CD4-positive, alpha-beta T cell (primary cell): ENCODE measurements at regions of chr9 and their contacts with region 1.

Region 1: GRCh38 chr9:133030317-133031129 is at the start of gene GTF3C5:
- DNase-seq: peak; percentile 83 to 98 (median 89)
- ATAC-seq: peak; percentile 96
- H3K4me3 ChIP-seq: peak within 1 kb of the TSS; percentile 93
- H3K4me3 Mint-ChIP-seq: peak within 1 kb of the TSS; percentile 99
- H3K27ac ChIP-seq: peak within 1 kb of the TSS; percentile 83 to 93
- H3K27ac Mint-ChIP-seq: peak within 1 kb of the TSS; percentile 89
- H3K4me1 ChIP-seq: peaks cover 31% of the 10 kb centered on the region
- H3K4me1 Mint-ChIP-seq: peaks cover 49% of the 10 kb centered on the region
- H3K27me3 ChIP-seq: no peaks in the 10 kb centered on the region
- H3K27me3 Mint-ChIP-seq: no peaks in the 10 kb centered on the region
- CTCF ChIP-seq: no peak
- total RNA-seq, gene GTF3C5: 49.0 to 52.4 TPM

Region 2: DNA sequence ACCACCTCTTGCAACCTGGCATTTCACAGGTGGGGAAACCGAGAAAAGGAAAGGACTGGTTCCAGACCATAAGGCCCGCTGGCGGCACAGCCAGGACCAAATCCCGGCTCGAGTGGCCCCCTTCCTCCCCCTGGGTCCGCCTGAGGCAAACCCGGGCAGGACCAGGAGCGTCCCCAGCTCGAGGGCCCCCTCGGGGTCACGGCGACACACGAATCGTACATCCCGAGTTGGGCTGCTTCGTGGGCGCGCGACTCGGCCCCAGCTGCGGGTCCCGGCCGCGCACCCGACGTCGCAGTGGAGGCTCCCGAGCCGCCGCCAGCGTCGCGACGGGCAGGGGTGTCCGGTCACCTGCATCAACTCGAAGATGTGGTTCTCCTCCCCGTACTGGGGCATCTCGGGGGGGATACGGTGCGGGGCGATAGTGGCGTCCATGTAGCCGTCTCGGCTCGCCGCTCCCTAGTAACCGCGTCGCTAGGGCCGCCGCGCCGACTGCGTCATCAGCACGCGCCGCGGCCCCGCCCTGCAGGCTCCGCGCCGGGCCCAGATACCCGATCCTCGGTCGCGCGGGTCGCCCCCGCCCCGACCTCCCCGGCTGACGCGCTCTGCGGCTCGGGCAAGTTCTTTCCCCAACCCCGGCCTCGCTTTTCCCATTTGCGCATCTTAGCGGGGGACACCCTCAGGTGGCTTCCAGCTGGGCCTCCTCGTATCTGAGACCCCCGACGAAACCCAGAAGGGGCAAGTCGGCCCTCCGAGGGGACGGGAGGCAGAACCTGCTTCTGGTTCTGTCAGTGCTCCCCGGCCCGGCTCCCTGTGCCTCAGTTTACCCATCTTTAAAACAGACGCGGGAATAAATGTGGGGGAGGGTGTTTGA is 152.5 kb before region 1 on chr9 and contains the start of gene AK8:
- CTCF ChIA-PET with region 1: no interaction called
- POLR2A ChIA-PET with region 1: no interaction called
- intact Hi-C with region 1: loop called in 1 of 2 experiments (anchors 5 kb)
- DNase-seq: peak; percentile 54 to 91 (median 69)
- ATAC-seq: peak; percentile 86
- H3K4me3 ChIP-seq: peak within 1 kb of the TSS; percentile 98
- H3K4me3 Mint-ChIP-seq: peak within 1 kb of the TSS; percentile 93
- H3K27ac ChIP-seq: peak within 1 kb of the TSS in 1 of 2 donors; percentile 44
- H3K27ac Mint-ChIP-seq: peak within 1 kb of the TSS; percentile 90
- H3K4me1 ChIP-seq: peaks cover 25% of the 10 kb centered on the region
- H3K4me1 Mint-ChIP-seq: peaks cover 13% of the 10 kb centered on the region
- H3K27me3 ChIP-seq: no peaks in the 10 kb centered on the region
- H3K27me3 Mint-ChIP-seq: no peaks in the 10 kb centered on the region
- CTCF ChIP-seq: no peak
- total RNA-seq, gene AK8: not detected

Region 3: GRCh38 chr9:133058550-133059320 is 28.2 kb after region 1 on chr9:
- CTCF ChIA-PET with region 1: no interaction called
- POLR2A ChIA-PET with region 1: interaction called, 10 read pairs
- intact Hi-C with region 1: no loop called
- DNase-seq: peak in 2 of 14 experiments; percentile 11 to 14
- ATAC-seq: no peak
- H3K4me3 ChIP-seq: no peak overlapping the region
- H3K4me3 Mint-ChIP-seq: peak overlapping the region; percentile 12
- H3K27ac ChIP-seq: no peak overlapping the region
- H3K27ac Mint-ChIP-seq: peak overlapping the region; percentile 77
- H3K4me1 ChIP-seq: peaks cover 46% of the 10 kb centered on the region
- H3K4me1 Mint-ChIP-seq: peaks cover 44% of the 10 kb centered on the region
- H3K27me3 ChIP-seq: no peaks in the 10 kb centered on the region
- H3K27me3 Mint-ChIP-seq: no peaks in the 10 kb centered on the region
- CTCF ChIP-seq: no peak

Region 4: DNA sequence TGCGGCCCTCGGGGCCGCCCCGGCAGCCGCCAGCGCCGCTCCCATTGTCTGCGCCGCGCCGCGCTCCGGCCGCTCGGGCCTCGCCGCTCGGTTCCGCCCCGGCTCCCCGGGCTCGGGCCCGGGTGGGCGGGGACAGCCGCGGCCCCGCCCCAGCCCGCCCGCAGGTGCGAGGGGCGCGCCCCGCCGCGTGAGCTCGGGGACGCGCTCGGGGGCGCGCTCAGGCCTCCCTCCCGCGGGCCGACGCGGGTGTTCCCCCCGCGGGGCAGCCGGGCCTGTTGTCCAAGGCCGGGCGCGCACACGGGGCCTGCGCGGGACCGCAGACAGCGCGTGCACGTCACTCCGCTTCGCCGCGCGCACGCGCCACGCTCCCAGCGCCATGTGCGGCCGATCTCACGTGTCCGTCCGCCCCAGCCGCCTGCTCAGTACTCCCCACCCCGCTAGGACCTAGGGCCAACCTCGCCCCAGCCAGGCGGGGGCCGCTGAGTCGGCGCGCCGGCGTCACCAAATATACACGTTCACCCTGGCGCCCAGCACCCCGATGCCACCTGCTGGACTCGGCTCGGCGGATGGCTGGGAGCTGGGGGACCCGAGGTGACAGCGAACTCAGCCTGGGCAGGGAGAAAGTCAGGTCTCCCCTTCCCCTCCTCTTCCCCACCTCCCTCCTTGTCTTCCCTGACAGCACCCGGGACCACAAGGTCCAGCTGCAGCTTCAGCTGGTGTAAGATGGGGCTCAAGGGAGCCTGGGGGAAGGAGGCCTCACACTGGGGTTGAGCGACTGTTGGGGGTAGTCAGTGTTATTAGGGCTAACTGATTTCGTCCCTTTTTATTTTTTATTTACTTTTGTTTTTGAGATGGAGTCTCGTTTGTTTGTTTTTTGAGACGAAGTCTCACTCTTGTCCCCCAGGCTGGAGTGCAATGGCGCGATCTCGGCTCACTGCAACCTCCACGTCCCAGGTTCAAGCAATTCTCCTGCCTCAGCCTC is 118.9 kb after region 1 on chr9:
- CTCF ChIA-PET with region 1: interaction called, 5 read pairs
- POLR2A ChIA-PET with region 1: interaction called, 20 read pairs
- intact Hi-C with region 1: loop called in 1 of 2 experiments (anchors 5 kb)
- DNase-seq: peak; percentile 64 to 95 (median 73)
- ATAC-seq: peak; percentile 43
- H3K4me3 ChIP-seq: peak overlapping the region; percentile 58
- H3K4me3 Mint-ChIP-seq: peak overlapping the region; percentile 88
- H3K27ac ChIP-seq: peak overlapping the region; percentile 60 to 74
- H3K27ac Mint-ChIP-seq: peak overlapping the region; percentile 87
- H3K4me1 ChIP-seq: peaks cover 43% of the 10 kb centered on the region
- H3K4me1 Mint-ChIP-seq: peaks cover 33% of the 10 kb centered on the region
- H3K27me3 ChIP-seq: no peaks in the 10 kb centered on the region
- H3K27me3 Mint-ChIP-seq: no peaks in the 10 kb centered on the region
- CTCF ChIP-seq: peak; percentile 44

Region 5: DNA sequence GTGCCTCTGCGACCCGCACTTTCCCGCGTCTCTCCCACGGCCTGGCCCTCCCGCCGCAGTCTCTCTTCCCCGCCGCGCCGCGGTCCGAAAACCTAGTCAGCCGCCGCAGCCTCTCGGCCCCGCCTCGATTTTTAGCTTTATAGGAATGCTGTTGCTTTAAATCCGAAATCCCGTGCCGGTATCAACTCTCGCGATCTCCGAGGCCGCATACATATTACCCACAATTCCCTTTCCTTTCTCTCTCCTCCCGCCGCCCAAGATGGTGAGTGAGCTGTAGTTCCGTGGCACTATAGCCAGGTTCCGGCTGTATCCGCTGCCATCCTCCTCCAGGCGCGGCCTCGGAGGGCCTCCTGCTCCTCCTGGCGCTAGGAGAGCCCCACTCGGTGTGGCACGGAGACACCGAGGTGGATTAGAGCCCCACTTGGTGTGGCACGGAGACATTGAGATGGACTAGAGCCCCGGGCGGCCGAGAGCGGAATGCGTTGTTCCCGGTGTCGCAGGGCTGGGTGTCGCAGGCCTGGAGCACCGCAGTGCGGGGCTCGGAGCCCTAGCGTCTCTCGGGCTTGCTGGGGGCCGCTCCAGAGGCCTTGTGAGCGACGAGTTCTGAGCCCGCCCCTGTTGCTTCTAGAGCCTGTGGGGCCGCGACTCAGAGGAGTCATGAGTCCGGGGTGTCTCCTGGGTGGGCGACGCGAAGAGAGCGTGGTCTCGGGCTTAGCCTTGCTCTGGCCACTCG is 317.6 kb after region 1 on chr9 and contains the starts of genes MED22 and RPL7A:
- CTCF ChIA-PET with region 1: no interaction called
- POLR2A ChIA-PET with region 1: interaction called, 10 read pairs
- intact Hi-C with region 1: loop called in 1 of 2 experiments (anchors 5 kb)
- DNase-seq: peak; percentile 83 to 97 (median 88)
- ATAC-seq: peak; percentile 90
- H3K4me3 ChIP-seq: peak within 1 kb of the TSS; percentile 88
- H3K4me3 Mint-ChIP-seq: peak within 1 kb of the TSS; percentile 96
- H3K27ac ChIP-seq: peak within 1 kb of the TSS; percentile 84 to 91
- H3K27ac Mint-ChIP-seq: peak within 1 kb of the TSS; percentile 85
- H3K4me1 ChIP-seq: peaks cover 50% of the 10 kb centered on the region
- H3K4me1 Mint-ChIP-seq: peaks cover 39% of the 10 kb centered on the region
- H3K27me3 ChIP-seq: no peaks in the 10 kb centered on the region
- H3K27me3 Mint-ChIP-seq: no peaks in the 10 kb centered on the region
- CTCF ChIP-seq: no peak
- total RNA-seq, gene MED22: 15.7 to 18.0 TPM
- total RNA-seq, gene RPL7A: 2,613 to 2,686 TPM

Region 6: DNA sequence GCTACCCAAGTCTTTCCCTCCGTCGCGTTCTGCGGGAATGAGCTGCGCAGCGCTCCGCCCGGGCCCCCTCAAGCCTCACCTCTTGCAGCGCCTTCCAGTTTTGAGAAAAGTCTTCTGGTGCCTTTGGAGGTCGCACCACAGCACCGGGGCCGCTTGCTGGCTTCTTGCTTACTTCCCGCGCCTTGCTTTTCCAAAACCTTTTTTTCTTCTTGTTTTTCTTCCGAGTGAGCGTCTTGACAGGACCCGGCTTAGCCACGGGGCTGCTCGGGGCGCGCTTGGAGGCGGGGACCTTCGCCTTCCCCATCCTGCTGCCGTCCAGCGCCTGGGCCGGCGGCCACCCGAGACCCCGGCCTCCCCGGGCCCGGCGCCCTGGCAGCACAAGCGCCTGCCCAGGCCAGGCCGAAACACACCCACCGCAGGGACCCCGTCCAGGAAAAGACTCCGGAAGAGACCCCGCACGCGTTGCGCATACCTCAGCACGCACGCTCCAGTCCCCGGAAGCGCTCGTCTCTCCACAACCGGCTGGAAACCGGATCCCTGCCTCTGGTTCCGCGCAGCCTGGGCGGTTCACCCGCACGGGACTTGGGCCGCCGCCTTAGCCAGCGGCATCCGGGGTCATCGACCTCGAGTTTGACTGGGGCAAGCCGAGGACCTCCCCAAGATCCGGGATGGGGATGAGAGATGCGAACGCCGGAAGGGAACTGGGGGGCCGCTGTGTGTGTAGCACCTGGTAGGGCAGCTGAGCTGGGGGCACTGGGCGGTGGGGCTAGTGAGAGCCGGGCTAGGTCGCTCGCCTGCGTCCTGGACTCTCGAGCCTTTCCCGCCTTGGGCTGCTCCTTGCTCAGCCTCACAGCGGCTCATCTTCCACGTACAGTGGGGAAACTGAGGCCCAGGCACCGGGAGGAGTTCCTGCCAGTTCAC is 387.3 kb after region 1 on chr9 and contains the start of gene REXO4:
- CTCF ChIA-PET with region 1: no interaction called
- POLR2A ChIA-PET with region 1: no interaction called
- intact Hi-C with region 1: loop called in 1 of 2 experiments (anchors 2 kb)
- DNase-seq: peak; percentile 71 to 91 (median 78)
- ATAC-seq: peak; percentile 86
- H3K4me3 ChIP-seq: peak within 1 kb of the TSS; percentile 79
- H3K4me3 Mint-ChIP-seq: peak within 1 kb of the TSS; percentile 92
- H3K27ac ChIP-seq: peak within 1 kb of the TSS; percentile 68 to 82
- H3K27ac Mint-ChIP-seq: peak within 1 kb of the TSS; percentile 86
- H3K4me1 ChIP-seq: peaks cover 34% of the 10 kb centered on the region
- H3K4me1 Mint-ChIP-seq: peaks cover 42% of the 10 kb centered on the region
- H3K27me3 ChIP-seq: no peaks in the 10 kb centered on the region
- H3K27me3 Mint-ChIP-seq: no peaks in the 10 kb centered on the region
- CTCF ChIP-seq: no peak
- total RNA-seq, gene REXO4: 17.3 to 18.5 TPM

Region 7: DNA sequence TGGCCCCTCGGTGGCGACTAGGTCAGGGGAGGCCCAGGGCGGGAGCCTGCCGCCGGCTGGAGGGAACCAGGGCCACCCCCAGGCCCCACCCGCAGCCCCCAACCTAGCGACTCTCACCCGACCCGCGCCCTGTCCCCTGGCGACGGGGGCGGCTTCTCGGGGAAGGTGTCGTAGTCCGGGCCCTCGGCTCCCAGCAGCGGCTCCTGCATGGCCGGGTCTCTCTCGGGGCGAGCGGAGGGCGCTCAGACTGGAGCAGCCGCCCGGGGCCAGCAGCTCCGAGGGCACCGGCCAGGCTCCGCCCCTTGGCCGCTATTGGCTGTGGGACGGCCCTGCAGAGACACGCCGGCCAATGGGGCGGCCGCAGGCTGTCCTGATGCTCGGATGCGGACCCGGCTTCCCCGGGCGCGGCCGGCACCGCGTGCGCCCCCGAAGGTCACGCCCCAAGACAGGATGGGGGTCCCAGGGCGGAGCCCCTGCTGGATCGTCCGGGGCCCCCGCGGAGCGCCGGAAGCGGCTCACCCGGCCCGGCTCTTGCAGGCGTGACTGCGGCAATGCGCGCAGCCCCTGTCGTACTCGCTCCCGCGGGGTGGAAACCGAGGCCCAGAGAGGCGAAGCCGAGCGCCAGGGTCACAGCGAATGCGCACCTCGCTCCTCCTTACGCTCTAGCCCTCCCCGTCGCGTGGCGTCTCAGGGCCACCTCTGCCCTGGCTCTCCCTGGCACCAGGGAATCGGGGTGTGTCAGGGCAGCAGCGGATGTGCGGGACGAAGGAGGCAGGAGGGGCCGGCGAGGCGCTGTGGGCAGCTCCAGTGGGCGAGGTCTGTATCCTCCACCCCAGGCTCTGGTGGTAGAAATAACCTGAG is 448.6 kb after region 1 on chr9 and contains the start of gene SLC2A6:
- CTCF ChIA-PET with region 1: no interaction called
- POLR2A ChIA-PET with region 1: no interaction called
- intact Hi-C with region 1: loop called in 1 of 2 experiments (anchors 5 kb)
- DNase-seq: peak; percentile 56 to 90 (median 74)
- ATAC-seq: peak; percentile 97
- H3K4me3 ChIP-seq: peak within 1 kb of the TSS; percentile 57
- H3K4me3 Mint-ChIP-seq: peak within 1 kb of the TSS; percentile 78
- H3K27ac ChIP-seq: no peak within 1 kb of the TSS
- H3K27ac Mint-ChIP-seq: peak within 1 kb of the TSS; percentile 14
- H3K4me1 ChIP-seq: peaks cover 24% of the 10 kb centered on the region
- H3K4me1 Mint-ChIP-seq: peaks cover 9% of the 10 kb centered on the region
- H3K27me3 ChIP-seq: no peaks in the 10 kb centered on the region
- H3K27me3 Mint-ChIP-seq: no peaks in the 10 kb centered on the region
- CTCF ChIP-seq: no peak
- total RNA-seq, gene SLC2A6: 1.8 to 3.2 TPM